Activated B cell treated with CpG ODN at 0.5 μM for 24 hours (primary cell): ENCODE measurements at regions of chr7 and their contacts with region 1.

Region 1: DNA sequence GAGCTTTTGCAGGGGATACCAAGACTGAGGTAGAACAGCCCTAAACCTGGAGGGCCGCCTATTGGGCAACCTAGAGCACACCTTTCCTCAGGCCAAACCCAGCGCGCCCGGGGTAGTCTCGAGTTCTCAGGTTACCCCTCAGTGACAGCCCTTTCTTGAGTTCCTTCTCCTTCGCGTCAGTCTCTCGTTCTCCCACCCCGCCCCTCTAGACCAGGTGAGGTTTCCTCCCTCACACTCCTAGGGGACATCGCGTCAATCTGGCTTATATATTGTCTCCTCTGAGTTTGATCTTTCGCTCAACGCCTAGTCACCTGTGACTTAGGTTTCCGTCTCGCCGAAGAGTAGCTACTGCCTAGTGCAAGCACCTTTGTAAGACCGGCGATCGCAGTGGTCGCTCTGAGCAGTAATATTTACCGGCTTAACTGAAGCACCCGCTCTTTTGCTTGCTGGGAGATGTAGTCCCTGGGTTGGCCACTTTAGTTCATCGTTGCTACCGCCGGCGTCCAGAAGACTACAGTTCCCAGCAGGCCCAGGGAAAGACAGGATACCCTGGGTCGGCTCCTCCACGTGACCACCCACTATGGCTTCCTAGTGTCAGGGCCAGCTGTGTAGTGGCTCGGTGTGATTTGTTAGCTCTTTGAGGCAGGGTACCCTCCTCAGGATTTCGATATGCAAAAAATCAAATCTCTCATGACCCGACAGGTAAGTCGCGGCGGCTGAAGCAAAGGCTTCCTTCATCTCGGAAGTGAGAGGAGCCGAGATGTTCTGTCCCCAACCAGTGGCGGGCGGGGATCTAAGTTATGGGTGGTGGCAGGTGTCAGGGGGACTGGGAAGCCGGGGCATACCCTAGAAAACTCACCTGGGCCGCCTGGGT is at the start of gene VPS50:
- DNase-seq: peak; percentile 74
- ATAC-seq: peak; percentile 97
- H3K4me3 Mint-ChIP-seq: peak within 1 kb of the TSS; percentile 100
- H3K27ac Mint-ChIP-seq: peak within 1 kb of the TSS; percentile 98
- H3K4me1 Mint-ChIP-seq: peaks cover 22% of the 10 kb centered on the region
- H3K27me3 Mint-ChIP-seq: no peaks in the 10 kb centered on the region
- CTCF ChIP-seq: no peak
- total RNA-seq, gene VPS50: 29.2 and 43.7 TPM in 2 replicates

Region 2: GRCh38 chr7:91880413-91881241 is 1351.4 kb before region 1 on chr7 and contains the start of gene MTERF1:
- CTCF ChIA-PET with region 1: no interaction called
- POLR2A ChIA-PET with region 1: no interaction called
- intact Hi-C with region 1: loop called (anchors 2 kb)
- DNase-seq: peak; percentile 92
- ATAC-seq: peak; percentile 98
- H3K4me3 Mint-ChIP-seq: peak within 1 kb of the TSS; percentile 100
- H3K27ac Mint-ChIP-seq: peak within 1 kb of the TSS; percentile 92
- H3K4me1 Mint-ChIP-seq: peaks cover 30% of the 10 kb centered on the region
- H3K27me3 Mint-ChIP-seq: no peaks in the 10 kb centered on the region
- CTCF ChIP-seq: peak; percentile 27
- total RNA-seq, gene MTERF1: 26.2 and 30.3 TPM in 2 replicates

Region 3: DNA sequence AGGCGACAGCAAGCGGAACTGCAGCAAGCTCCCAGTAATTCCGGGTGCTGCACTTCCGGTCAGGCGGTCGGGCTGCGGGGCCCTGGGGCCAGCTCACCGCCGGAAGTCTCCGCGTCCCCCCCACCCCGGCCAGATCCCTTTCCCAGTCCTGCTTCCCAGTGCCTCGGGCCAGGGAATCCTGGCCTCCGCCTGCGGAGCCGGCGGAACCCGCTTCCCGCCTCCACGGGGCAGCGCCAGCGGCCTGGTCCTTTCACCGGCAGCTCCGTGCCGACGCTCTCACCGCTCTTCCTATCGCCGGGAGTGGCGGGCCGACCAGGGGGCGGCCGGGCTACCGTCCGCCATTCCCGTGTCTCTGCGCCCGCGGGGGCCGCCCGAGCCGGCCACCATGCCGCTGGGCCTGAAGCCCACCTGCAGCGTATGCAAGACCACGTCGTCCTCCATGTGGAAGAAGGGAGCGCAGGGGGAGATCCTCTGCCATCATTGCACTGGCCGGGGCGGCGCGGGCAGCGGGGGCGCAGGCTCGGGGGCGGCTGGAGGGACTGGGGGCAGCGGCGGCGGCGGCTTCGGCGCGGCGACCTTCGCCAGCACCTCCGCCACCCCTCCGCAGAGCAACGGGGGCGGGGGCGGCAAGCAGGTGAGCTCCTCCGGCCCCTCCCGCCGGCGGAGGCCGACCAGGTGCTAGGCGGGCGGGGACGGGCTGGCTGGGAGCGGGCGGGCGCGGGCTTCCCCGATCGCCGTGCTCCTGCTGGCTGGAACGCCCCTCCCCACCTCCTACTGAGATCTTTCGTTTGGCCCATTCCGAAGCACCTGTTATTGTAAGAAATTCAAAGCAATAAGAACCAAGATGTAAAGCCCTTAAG is 784.5 kb before region 1 on chr7 and contains the start of gene GATAD1:
- CTCF ChIA-PET with region 1: no interaction called
- POLR2A ChIA-PET with region 1: interaction called, 3 read pairs
- intact Hi-C with region 1: loop called (anchors 1 kb)
- DNase-seq: peak; percentile 74
- ATAC-seq: peak; percentile 85
- H3K4me3 Mint-ChIP-seq: peak within 1 kb of the TSS; percentile 95
- H3K27ac Mint-ChIP-seq: peak within 1 kb of the TSS; percentile 97
- H3K4me1 Mint-ChIP-seq: peaks cover 8% of the 10 kb centered on the region
- H3K27me3 Mint-ChIP-seq: no peaks in the 10 kb centered on the region
- CTCF ChIP-seq: peak; percentile 61
- total RNA-seq, gene GATAD1: 30.6 and 36.2 TPM in 2 replicates

Region 4: DNA sequence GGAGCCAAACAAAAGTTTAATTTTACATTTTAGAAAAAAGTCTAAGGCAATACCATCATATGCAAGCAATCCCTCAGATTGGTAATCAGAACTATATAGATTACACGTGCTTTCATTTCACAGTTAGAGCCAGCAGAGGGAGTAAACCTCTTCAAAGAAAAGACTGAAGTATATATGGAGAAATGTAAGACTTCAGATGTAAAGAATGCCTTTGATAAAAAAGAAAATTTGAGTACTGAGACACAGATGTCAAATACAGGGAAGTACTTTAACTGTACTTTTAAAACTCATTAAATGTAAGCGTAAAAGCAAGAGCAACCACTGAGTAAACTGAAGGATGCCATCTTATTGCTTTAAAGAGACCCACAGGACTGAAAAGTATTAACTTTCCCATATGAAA is 540.5 kb before region 1 on chr7:
- CTCF ChIA-PET with region 1: no interaction called
- POLR2A ChIA-PET with region 1: no interaction called
- intact Hi-C with region 1: loop called (anchors 5 kb)
- DNase-seq: no peak
- ATAC-seq: peak; percentile 61
- H3K4me3 Mint-ChIP-seq: no peak overlapping the region
- H3K27ac Mint-ChIP-seq: no peak overlapping the region
- H3K4me1 Mint-ChIP-seq: peaks cover 9% of the 10 kb centered on the region
- H3K27me3 Mint-ChIP-seq: no peaks in the 10 kb centered on the region
- CTCF ChIP-seq: no peak

Region 5: GRCh38 chr7:92797693-92798092 is 434.3 kb before region 1 on chr7:
- CTCF ChIA-PET with region 1: no interaction called
- POLR2A ChIA-PET with region 1: no interaction called
- intact Hi-C with region 1: no loop called
- DNase-seq: no peak
- ATAC-seq: no peak
- H3K4me3 Mint-ChIP-seq: no peak overlapping the region
- H3K27ac Mint-ChIP-seq: no peak overlapping the region
- H3K4me1 Mint-ChIP-seq: peaks cover 13% of the 10 kb centered on the region
- H3K27me3 Mint-ChIP-seq: no peaks in the 10 kb centered on the region
- CTCF ChIP-seq: no peak

Region 6: DNA sequence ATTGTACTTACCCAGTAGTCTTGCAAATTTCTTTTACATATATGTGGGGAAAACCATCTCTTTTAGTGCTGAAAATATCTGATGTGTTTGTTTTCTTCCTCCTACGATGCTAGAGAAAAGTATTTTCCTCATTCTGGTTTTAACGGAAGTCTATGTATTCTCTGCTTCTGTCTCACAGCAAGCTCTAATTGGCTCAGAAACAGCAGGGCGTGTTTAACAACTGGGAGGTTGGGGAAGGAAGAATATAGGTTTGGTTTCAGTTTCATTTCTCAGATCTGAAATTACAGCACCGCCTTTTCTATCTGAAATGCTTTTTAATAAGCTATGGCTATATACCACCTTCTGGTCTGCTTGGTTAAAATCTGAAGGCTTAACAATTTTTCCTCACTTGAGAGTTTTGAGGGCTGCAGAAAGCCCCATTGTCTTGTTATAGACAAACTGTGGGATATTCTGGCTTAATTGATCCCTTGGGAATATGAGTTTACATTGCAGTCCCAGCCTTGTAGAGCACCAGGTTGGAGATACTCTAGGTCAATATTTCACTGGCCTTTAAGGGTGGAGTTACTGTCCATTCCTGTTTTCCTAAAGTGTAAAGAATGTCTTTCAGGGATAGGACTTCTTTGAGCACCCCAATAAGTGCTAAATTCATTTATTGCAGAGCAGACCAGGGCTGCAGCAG is 114.0 kb before region 1 on chr7 and contains the start of gene SAMD9:
- CTCF ChIA-PET with region 1: interaction called, 6 read pairs
- POLR2A ChIA-PET with region 1: interaction called, 10 read pairs
- intact Hi-C with region 1: loop called (anchors 1 kb)
- DNase-seq: no peak
- ATAC-seq: peak; percentile 99
- H3K4me3 Mint-ChIP-seq: peak within 1 kb of the TSS; percentile 79
- H3K27ac Mint-ChIP-seq: peak within 1 kb of the TSS; percentile 74
- H3K4me1 Mint-ChIP-seq: peaks cover 46% of the 10 kb centered on the region
- H3K27me3 Mint-ChIP-seq: no peaks in the 10 kb centered on the region
- CTCF ChIP-seq: no peak
- total RNA-seq, gene SAMD9: 24.4 and 26.3 TPM in 2 replicates

Region 7: GRCh38 chr7:94160719-94161435 is 928.8 kb after region 1 on chr7:
- CTCF ChIA-PET with region 1: no interaction called
- POLR2A ChIA-PET with region 1: no interaction called
- intact Hi-C with region 1: loop called (anchors 1 kb)
- DNase-seq: no peak
- ATAC-seq: peak; percentile 79
- H3K4me3 Mint-ChIP-seq: peak overlapping the region; percentile 78
- H3K27ac Mint-ChIP-seq: peak overlapping the region; percentile 89
- H3K4me1 Mint-ChIP-seq: peaks cover 41% of the 10 kb centered on the region
- H3K27me3 Mint-ChIP-seq: no peaks in the 10 kb centered on the region
- CTCF ChIP-seq: no peak